ENCODE measurements at regions of chr9 and their contacts with region 1.

Region 1: GRCh38 chr9:22307013-22307711 is 139.5 kb upstream of the DMRTA1 start:
- DNase-seq: no peak
- ATAC-seq: peak in 1 of 2 donors; percentile 44

Region 2: DNA sequence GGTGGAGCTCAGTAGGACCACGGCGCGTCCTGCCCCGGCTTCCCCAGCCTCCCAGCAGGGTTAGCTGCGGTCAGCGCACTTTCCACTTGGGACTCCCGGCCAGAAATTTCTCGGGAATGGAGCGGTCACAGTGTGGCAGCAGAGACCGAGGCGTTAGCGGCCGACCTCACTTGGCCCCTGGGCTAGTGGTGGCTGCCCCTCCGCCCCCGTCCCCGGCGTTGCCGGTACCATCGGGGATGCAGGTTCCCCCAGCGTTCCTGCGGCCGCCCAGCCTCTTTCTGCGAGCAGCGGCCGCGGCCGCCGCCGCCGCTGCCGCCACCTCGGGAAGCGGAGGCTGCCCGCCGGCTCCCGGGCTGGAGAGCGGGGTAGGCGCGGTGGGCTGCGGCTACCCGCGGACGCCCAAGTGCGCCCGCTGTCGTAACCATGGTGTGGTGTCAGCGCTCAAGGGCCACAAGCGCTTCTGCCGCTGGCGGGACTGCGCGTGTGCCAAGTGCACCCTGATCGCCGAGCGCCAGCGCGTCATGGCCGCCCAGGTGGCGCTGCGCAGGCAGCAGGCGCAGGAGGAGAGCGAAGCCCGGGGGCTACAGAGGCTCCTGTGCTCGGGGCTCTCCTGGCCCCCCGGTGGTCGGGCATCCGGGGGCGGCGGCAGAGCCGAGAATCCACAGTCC is 139.9 kb after region 1 on chr9:
- intact Hi-C with region 1: loop called (anchors 2 to 10 kb)
- DNase-seq: peak; percentile 55
- ATAC-seq: peak; percentile 84 to 92

Region 3: DNA sequence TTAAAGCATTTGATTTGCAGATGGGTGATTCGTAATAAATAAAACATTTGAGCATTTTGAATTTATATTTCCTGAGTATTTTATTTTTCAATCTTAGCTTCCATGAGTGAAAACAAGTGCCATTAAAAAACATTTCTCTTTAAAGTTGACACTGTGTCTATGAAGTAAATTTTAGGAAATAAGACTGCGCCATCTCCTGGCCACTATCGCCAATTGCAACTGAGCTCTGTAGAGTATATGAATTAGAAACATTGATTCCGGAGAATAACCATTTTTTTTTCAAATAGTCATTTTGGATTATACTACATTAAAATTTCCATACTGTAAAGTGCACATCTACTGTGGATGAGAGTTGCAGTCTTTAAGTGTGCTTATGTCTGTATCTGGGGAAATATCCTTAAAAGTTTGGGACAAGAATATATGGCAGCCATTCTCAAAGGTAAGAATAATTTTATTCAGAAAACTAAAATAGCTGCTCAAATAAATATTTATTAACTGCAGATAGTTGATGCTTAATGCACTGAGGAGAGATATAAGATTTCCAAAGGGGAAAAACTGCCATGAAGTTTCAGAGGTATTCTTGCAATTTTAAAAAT is 145.4 kb after region 1 on chr9:
- intact Hi-C with region 1: loop called (anchors 2 to 10 kb)
- DNase-seq: peak; percentile 33
- ATAC-seq: no peak

Measured in left cardiac atrium (tissue), 4 donors.